Heart right ventricle (tissue), 16 donors: ENCODE measurements at regions of chr11 and their contacts with region 1.

Region 1: GRCh38 chr11:68030318-68031138 is at the start of gene NDUFS8:
- DNase-seq: peak; percentile 96 to 97
- ATAC-seq: peak; percentile 86 to 97 (median 94)
- H3K4me3 ChIP-seq: peak within 1 kb of the TSS; percentile 54 to 96 (median 79)
- H3K27ac ChIP-seq: peak within 1 kb of the TSS; percentile 64 to 97 (median 92)
- H3K4me1 ChIP-seq: peaks cover 17 to 48% (median 34%) of the 10 kb centered on the region in 9 donors
- H3K27me3 ChIP-seq: no peaks in the 10 kb centered on the region
- CTCF ChIP-seq: no peak
- total RNA-seq, gene NDUFS8: 330 to 492 (median 421) TPM

Region 2: GRCh38 chr11:67983951-67984350 is 46.6 kb before region 1 on chr11:
- intact Hi-C with region 1: no loop called
- DNase-seq: no peak
- ATAC-seq: no peak
- H3K4me3 ChIP-seq: no peak overlapping the region
- H3K27ac ChIP-seq: no peak overlapping the region
- H3K4me1 ChIP-seq: no peaks in the 10 kb centered on the region
- H3K27me3 ChIP-seq: peaks cover 0 to 38% (median 0%) of the 10 kb centered on the region in 7 donors
- CTCF ChIP-seq: no peak

Region 3: DNA sequence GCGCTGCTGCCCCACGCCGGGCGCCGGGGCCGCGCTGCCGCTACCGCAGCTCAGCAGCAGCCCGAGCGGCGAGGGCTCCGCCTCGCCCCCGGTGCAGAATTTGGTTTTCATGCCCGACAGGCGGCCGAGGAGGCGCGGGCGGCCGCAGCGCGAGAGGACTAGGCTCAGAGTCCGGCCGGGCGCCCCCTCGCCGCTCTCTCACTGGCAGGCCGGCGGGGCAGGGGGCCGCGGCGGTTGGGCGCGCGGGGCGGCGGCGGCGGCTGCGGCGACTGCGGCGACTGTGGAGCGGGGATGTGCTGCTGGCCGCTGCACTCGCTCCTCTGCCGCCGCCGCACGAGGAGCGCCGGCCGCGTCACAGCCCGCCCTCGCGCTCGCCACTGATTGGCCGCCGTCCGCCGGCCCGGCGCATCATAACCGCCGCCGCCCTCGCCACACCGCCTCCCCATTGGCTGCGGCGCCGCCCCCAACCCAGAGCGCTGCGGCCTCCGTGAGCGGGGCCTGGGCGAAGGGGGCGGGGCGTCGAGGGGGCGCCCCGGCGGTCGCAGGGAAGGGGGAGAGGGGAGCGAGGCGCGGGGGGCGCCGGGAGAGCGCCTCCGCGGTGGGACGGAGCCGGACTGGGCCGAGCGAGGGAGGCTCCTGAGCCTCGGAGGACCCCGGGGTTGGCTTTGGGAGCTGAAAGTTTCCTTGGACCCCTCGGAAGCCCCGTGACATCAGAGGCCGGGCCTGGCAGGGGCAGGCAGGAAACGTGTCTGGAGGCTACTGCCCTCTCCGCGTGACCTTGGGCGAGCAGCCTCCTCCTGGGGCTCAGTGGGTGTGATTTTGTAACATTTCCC is 90.8 kb after region 1 on chr11 and contains the start of gene CHKA:
- intact Hi-C with region 1: loop called in 3 of 10 experiments (anchors 5 to 10 kb)
- DNase-seq: peak; percentile 91 to 95
- ATAC-seq: peak; percentile 93 to 97 (median 96)
- H3K4me3 ChIP-seq: peak within 1 kb of the TSS; percentile 31 to 90 (median 65)
- H3K27ac ChIP-seq: peak within 1 kb of the TSS; percentile 83 to 100 (median 98)
- H3K4me1 ChIP-seq: peaks cover 3 to 57% (median 40%) of the 10 kb centered on the region in 9 donors
- H3K27me3 ChIP-seq: no peaks in the 10 kb centered on the region
- CTCF ChIP-seq: peak in 1 of 9 donors; percentile 15
- total RNA-seq, gene CHKA: 7.0 to 11.8 (median 9.2) TPM

Region 4: GRCh38 chr11:68213555-68214174 is 183.1 kb after region 1 on chr11:
- intact Hi-C with region 1: loop called in 3 of 10 experiments (anchors 5 to 10 kb)
- DNase-seq: peak; percentile 87 to 90
- ATAC-seq: peak; percentile 59 to 80 (median 69)
- H3K4me3 ChIP-seq: peak overlapping the region; percentile 68 to 97 (median 81)
- H3K27ac ChIP-seq: peak overlapping the region; percentile 94 to 100 (median 100)
- H3K4me1 ChIP-seq: peaks cover 17 to 65% (median 49%) of the 10 kb centered on the region in 9 donors
- H3K27me3 ChIP-seq: no peaks in the 10 kb centered on the region
- CTCF ChIP-seq: peak in 3 of 9 donors; percentile 7 to 18 (median 9)